Endothelial cell of umbilical vein (primary cell): ENCODE measurements at regions of chr5 and their contacts with region 1.

Region 1: GRCh38 chr5:173573126-173573960 is 43.1 kb downstream of the BOD1 start:
- DNase-seq: peak; percentile 65
- H3K4me3 ChIP-seq: no peak overlapping the region
- H3K27ac ChIP-seq: no peak overlapping the region
- H3K4me1 ChIP-seq: peaks cover 2% of the 10 kb centered on the region
- H3K27me3 ChIP-seq: peaks cover 0 to 4% of the 10 kb centered on the region in 2 experiments
- CTCF ChIP-seq: peak; percentile 94 to 98
- POLR2A ChIP-seq: no peak

Region 2: DNA sequence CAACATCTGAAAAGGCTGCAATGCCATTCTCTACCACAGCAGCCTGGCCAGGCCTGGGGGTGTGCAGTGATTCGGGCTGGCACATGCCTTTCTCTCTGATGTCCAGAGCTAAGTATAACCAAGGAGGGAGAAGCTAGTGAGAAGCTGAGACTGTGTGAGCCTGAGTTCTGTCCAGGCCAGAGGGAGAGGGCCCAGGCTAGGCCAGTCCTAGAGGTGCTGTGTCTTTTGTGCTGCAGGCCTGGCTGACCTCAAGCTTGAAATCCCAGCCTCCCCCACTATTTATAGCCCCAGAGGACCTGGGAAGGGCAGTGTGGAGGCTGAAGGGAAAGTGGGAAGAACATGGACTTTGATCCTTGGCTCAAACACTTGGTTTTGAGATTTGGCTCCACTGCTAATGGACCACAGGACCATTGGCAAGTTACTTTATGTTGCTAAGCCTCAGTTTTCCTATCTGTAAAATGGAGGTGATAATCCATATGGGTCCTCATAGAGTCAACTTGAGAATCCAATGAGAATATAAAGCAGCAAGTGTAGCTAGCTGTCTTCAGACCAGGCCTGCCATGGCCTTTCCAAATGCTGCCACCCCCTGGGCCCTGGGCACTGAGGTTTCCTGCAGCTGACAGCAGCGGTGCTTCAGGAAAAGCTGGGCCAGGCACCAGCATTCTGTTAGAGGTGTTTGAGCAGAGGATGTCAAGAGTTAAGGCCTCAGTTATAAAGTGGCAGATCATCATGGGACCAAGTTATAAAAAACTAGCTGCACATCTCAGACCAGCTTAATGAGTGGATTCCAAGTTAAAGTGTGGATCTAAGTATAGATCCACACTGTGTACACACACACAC is 407.9 kb before region 1 on chr5:
- CTCF ChIA-PET with region 1: interaction called, 21 read pairs
- POLR2A ChIA-PET with region 1: no interaction called
- dilution Hi-C with region 1: no loop called
- intact Hi-C with region 1: loop called (anchors 5 kb)
- DNase-seq: no peak
- H3K4me3 ChIP-seq: no peak overlapping the region
- H3K27ac ChIP-seq: no peak overlapping the region
- H3K4me1 ChIP-seq: no peaks in the 10 kb centered on the region
- H3K27me3 ChIP-seq: no peaks in the 10 kb centered on the region
- CTCF ChIP-seq: no peak
- POLR2A ChIP-seq: no peak

Region 3: DNA sequence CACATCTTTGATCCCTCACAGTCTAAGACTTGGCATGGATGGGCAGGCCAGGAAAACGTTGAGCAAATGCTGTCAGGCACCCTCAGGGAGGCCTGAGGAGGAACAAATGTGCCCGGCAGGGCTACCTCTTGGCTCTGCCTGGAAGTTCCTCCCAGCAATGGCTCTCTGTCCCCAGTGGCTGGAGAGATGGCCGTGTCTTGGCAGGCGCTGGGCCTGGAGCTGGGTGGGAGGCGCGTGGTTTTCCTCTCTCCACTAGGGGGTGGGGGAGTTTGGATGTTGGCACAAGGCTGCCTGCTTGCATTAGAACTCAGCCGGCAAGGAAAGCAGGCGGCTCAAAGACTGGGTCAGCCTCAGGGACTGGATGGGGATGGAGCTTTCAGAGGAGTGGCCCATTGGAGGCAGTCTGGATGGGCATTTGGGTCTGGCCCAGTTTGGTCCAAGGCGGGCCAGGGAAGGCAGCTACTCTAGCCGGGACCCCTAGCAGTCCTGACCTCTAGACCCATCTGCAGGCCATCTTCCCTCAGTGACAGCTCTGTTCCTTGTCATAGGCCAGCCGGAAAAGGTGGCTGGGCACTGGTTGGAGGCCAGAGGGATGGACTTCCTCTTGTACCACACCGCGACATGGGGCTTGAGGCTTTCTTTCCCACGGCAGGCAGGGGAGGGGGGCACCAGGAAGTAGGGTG is 176.9 kb before region 1 on chr5:
- CTCF ChIA-PET with region 1: interaction called, 9 read pairs
- POLR2A ChIA-PET with region 1: no interaction called
- dilution Hi-C with region 1: no loop called
- intact Hi-C with region 1: loop called (anchors 5 kb)
- DNase-seq: no peak
- H3K4me3 ChIP-seq: no peak overlapping the region
- H3K27ac ChIP-seq: no peak overlapping the region
- H3K4me1 ChIP-seq: no peaks in the 10 kb centered on the region
- H3K27me3 ChIP-seq: no peaks in the 10 kb centered on the region
- CTCF ChIP-seq: no peak
- POLR2A ChIP-seq: no peak

Region 4: GRCh38 chr5:173451031-173451430 is 122.3 kb before region 1 on chr5:
- CTCF ChIA-PET with region 1: interaction called, 9 read pairs
- POLR2A ChIA-PET with region 1: no interaction called
- dilution Hi-C with region 1: no loop called
- intact Hi-C with region 1: loop called (anchors 5 kb)
- DNase-seq: no peak
- H3K4me3 ChIP-seq: no peak overlapping the region
- H3K27ac ChIP-seq: no peak overlapping the region
- H3K4me1 ChIP-seq: peaks cover 18% of the 10 kb centered on the region
- H3K27me3 ChIP-seq: no peaks in the 10 kb centered on the region
- CTCF ChIP-seq: peak; percentile 4 to 9
- POLR2A ChIP-seq: no peak